MCF 10A (cell line): ENCODE measurements at regions of chr11 and their contacts with region 1.

Region 1: DNA sequence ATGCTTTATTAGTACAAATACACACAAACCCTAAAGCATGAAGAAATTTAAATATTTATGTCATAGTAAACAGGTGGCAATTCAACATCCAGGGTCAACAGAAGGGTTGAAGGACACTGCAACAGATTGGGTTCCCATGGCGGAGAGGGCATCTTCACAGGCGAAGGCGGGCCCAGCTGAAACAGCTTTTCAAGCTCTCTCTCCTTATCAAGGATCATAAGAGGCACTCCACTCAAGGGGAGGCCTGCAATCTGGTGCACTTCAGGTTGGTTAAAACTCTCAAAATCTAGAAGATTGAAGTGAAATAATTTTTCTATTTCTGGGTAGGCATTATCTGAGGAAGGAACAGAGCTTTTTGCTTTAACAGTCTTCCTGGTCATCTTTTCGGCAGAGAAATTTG is 16.8 kb upstream of the SLC22A8 start:
- DNase-seq: no peak
- H3K4me3 Mint-ChIP-seq: no peak overlapping the region
- H3K27ac Mint-ChIP-seq: no peak overlapping the region
- H3K4me1 Mint-ChIP-seq: peaks cover 6% of the 10 kb centered on the region
- H3K27me3 Mint-ChIP-seq: peaks cover 86% of the 10 kb centered on the region
- CTCF ChIP-seq: no peak

Region 2: GRCh38 chr11:62895501-62895900 is 137.0 kb before region 1 on chr11:
- CTCF ChIA-PET with region 1: no interaction called
- POLR2A ChIA-PET with region 1: no interaction called
- intact Hi-C with region 1: no loop called
- DNase-seq: no peak
- H3K4me3 Mint-ChIP-seq: no peak overlapping the region
- H3K27ac Mint-ChIP-seq: no peak overlapping the region
- H3K4me1 Mint-ChIP-seq: no peaks in the 10 kb centered on the region
- H3K27me3 Mint-ChIP-seq: peaks cover 35% of the 10 kb centered on the region
- CTCF ChIP-seq: no peak

Region 3: GRCh38 chr11:63212742-63213141 is 180.3 kb after region 1 on chr11:
- CTCF ChIA-PET with region 1: interaction called, 19 read pairs
- POLR2A ChIA-PET with region 1: no interaction called
- intact Hi-C with region 1: loop called (anchors 1 kb)
- DNase-seq: peak; percentile 41
- H3K4me3 Mint-ChIP-seq: no peak overlapping the region
- H3K27ac Mint-ChIP-seq: no peak overlapping the region
- H3K4me1 Mint-ChIP-seq: no peaks in the 10 kb centered on the region
- H3K27me3 Mint-ChIP-seq: peaks cover 53% of the 10 kb centered on the region
- CTCF ChIP-seq: peak; percentile 28

Region 4: GRCh38 chr11:63274776-63275175 is 242.3 kb after region 1 on chr11:
- CTCF ChIA-PET with region 1: no interaction called
- POLR2A ChIA-PET with region 1: no interaction called
- intact Hi-C with region 1: loop called (anchors 1 kb)
- DNase-seq: peak; percentile 36
- H3K4me3 Mint-ChIP-seq: no peak overlapping the region
- H3K27ac Mint-ChIP-seq: no peak overlapping the region
- H3K4me1 Mint-ChIP-seq: no peaks in the 10 kb centered on the region
- H3K27me3 Mint-ChIP-seq: peaks cover 56% of the 10 kb centered on the region
- CTCF ChIP-seq: no peak